Heart right ventricle (tissue), 16 donors: ENCODE measurements at regions of chr16 and their contacts with region 1.

Region 1: GRCh38 chr16:86563489-86564345 is 2.9 kb upstream of the FOXC2 start:
- DNase-seq: peak; percentile 80 to 89
- ATAC-seq: peak; percentile 40 to 85 (median 74)
- H3K4me3 ChIP-seq: peak overlapping the region in 4 of 10 donors; percentile 10 to 37 (median 19)
- H3K27ac ChIP-seq: peak overlapping the region in 3 of 10 donors; percentile 5 to 44 (median 41)
- H3K4me1 ChIP-seq: peaks cover 0 to 26% (median 11%) of the 10 kb centered on the region in 9 donors
- H3K27me3 ChIP-seq: peaks cover 9 to 86% (median 60%) of the 10 kb centered on the region in 7 donors
- CTCF ChIP-seq: peak; percentile 100

Region 2: GRCh38 chr16:86618811-86619794 is 55.4 kb after region 1 on chr16:
- intact Hi-C with region 1: no loop called
- DNase-seq: no peak
- ATAC-seq: peak in 7 of 8 donors; percentile 34 to 74 (median 58)
- H3K4me3 ChIP-seq: peak overlapping the region in 8 of 10 donors; percentile 5 to 44 (median 38)
- H3K27ac ChIP-seq: peak overlapping the region in 2 of 10 donors; percentile 2 to 22
- H3K4me1 ChIP-seq: no peaks in the 10 kb centered on the region
- H3K27me3 ChIP-seq: peaks cover 0 to 15% (median 0%) of the 10 kb centered on the region in 7 donors
- CTCF ChIP-seq: no peak

Region 3: GRCh38 chr16:86761111-86762031 is 197.7 kb after region 1 on chr16:
- intact Hi-C with region 1: loop called in 1 of 10 experiments (anchors 5 kb)
- DNase-seq: peak; percentile 62 to 79
- ATAC-seq: peak in 7 of 8 donors; percentile 72 to 89 (median 82)
- H3K4me3 ChIP-seq: peak overlapping the region in 6 of 10 donors; percentile 2 to 28 (median 24)
- H3K27ac ChIP-seq: no peak overlapping the region
- H3K4me1 ChIP-seq: peaks cover 0 to 22% (median 6%) of the 10 kb centered on the region in 9 donors
- H3K27me3 ChIP-seq: peaks cover 0 to 93% (median 62%) of the 10 kb centered on the region in 7 donors
- CTCF ChIP-seq: peak; percentile 73 to 85 (median 79)

Region 4: GRCh38 chr16:86874141-86874540 is 310.4 kb after region 1 on chr16:
- intact Hi-C with region 1: loop called in 1 of 10 experiments (anchors 10 kb)
- DNase-seq: no peak
- ATAC-seq: no peak
- H3K4me3 ChIP-seq: no peak overlapping the region
- H3K27ac ChIP-seq: no peak overlapping the region
- H3K4me1 ChIP-seq: no peaks in the 10 kb centered on the region
- H3K27me3 ChIP-seq: peaks cover 0 to 17% (median 8%) of the 10 kb centered on the region in 7 donors
- CTCF ChIP-seq: peak; percentile 7 to 65 (median 27)

Region 5: GRCh38 chr16:87067836-87068761 is 504.4 kb after region 1 on chr16:
- intact Hi-C with region 1: loop called in 4 of 10 experiments (anchors 2 to 5 kb)
- DNase-seq: no peak
- ATAC-seq: no peak
- H3K4me3 ChIP-seq: no peak overlapping the region
- H3K27ac ChIP-seq: no peak overlapping the region
- H3K4me1 ChIP-seq: no peaks in the 10 kb centered on the region
- H3K27me3 ChIP-seq: peaks cover 0 to 70% (median 36%) of the 10 kb centered on the region in 7 donors
- CTCF ChIP-seq: no peak

Region 6: GRCh38 chr16:87278191-87279095 is 714.7 kb after region 1 on chr16:
- intact Hi-C with region 1: loop called (anchors 1 to 5 kb)
- DNase-seq: peak; percentile 72 to 76
- ATAC-seq: peak; percentile 86 to 96 (median 94)
- H3K4me3 ChIP-seq: no peak overlapping the region
- H3K27ac ChIP-seq: no peak overlapping the region
- H3K4me1 ChIP-seq: peaks cover 0 to 6% (median 0%) of the 10 kb centered on the region in 9 donors
- H3K27me3 ChIP-seq: peaks cover 0 to 14% (median 0%) of the 10 kb centered on the region in 7 donors
- CTCF ChIP-seq: peak; percentile 73 to 95 (median 87)

Region 7: DNA sequence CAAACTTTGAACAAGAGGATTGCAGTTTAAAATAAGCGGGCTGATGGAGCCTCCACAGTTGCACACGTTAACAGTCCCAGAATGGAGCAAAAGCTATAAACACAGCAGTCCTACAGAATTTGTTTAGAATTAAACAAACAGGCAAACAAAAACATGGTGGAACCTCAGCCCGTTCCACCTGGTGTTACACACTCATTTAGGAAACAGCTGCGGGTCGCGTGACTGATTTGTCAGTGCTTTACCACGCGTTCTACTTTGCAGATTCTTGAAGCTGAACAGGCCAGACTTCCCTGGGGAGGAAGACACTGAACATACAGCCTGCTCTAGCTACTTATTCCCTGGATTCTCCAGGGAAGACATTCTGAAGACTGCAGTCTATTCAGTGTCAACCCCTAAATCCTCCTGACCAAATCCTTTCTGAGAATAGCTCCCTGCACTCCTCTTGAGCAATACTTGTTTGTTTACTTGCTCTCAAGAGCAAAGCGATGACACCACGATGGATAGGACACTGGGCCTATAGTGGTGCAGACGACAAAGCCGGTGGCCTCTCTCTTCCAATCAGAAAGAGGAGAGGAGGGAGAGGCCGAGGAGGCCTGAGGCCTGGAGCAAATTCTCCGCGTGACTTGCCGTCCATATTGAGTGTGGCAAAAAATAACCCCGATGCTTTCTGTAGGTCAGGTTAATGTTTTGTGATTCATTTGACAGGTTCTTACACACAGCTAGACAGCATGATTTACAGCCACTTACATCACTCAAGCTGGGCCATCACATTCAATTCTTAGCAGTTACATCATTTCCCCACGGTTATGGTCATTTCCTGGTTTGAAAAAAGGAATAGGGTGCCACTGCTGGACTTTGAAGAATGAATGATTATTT is 824.5 kb after region 1 on chr16:
- intact Hi-C with region 1: loop called in 1 of 10 experiments (anchors 10 kb)
- DNase-seq: peak; percentile 82 to 97
- ATAC-seq: peak; percentile 59 to 85 (median 74)
- H3K4me3 ChIP-seq: peak overlapping the region in 7 of 10 donors; percentile 23 to 41 (median 29)
- H3K27ac ChIP-seq: peak overlapping the region; percentile 83 to 95 (median 88)
- H3K4me1 ChIP-seq: peaks cover 10 to 45% (median 41%) of the 10 kb centered on the region in 9 donors
- H3K27me3 ChIP-seq: no peaks in the 10 kb centered on the region
- CTCF ChIP-seq: no peak